ENCODE measurements at regions of chr2 and their contacts with region 1.

Region 1: DNA sequence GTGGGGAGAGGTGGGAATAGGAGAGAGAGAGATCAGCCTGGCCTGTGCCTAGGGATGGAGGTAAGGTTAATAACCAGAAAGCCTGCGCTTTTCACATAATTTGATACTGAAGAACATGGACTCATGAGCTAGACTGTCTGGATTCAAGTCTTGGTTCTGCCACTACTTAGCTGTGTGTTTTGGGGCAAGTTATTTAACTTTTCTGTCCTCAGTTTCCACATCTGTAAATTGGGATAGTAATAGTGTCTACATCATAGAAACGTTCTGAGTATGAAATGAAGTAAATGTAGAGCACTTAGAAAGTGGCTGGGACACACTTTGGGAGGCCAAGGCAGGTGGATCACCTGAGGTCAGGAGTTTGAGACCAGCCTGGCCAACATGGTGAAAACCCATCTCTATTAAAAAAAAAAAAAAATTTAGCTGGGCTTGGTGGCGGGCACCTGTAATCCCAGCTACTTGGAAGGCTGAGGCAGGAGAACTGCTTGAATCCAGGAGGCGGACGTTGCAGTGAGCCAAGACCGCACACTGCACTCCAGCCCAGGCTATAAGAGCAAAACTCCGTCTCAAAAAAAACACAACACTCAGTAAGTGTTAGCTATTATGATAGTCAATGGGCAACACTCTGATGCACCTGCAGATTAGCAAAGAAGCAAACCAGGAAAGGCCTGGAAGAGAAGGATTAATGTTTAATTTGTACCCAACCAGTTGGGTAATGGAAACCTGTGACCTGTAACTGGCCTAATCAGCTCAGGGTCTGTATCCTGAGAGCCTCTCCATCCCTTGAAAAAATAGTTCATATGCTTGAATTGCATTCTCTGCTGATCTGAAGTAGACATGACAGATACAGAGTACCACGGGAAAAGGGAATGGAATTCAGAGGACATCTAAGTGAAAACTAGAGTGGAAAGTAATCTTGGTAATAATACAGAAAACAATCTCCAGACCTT is 6.8 kb downstream of the GALM start:
- DNase-seq: no peak
- ATAC-seq: no peak
- H3K4me3 ChIP-seq: no peak overlapping the region
- H3K4me3 Mint-ChIP-seq: no peak overlapping the region
- H3K27ac ChIP-seq: no peak overlapping the region
- H3K27ac Mint-ChIP-seq: peak overlapping the region; percentile 61
- H3K4me1 ChIP-seq: peaks cover 70% of the 10 kb centered on the region
- H3K4me1 Mint-ChIP-seq: peaks cover 68% of the 10 kb centered on the region
- H3K27me3 ChIP-seq: no peaks in the 10 kb centered on the region
- H3K27me3 Mint-ChIP-seq: no peaks in the 10 kb centered on the region
- CTCF ChIP-seq: no peak

Region 2: DNA sequence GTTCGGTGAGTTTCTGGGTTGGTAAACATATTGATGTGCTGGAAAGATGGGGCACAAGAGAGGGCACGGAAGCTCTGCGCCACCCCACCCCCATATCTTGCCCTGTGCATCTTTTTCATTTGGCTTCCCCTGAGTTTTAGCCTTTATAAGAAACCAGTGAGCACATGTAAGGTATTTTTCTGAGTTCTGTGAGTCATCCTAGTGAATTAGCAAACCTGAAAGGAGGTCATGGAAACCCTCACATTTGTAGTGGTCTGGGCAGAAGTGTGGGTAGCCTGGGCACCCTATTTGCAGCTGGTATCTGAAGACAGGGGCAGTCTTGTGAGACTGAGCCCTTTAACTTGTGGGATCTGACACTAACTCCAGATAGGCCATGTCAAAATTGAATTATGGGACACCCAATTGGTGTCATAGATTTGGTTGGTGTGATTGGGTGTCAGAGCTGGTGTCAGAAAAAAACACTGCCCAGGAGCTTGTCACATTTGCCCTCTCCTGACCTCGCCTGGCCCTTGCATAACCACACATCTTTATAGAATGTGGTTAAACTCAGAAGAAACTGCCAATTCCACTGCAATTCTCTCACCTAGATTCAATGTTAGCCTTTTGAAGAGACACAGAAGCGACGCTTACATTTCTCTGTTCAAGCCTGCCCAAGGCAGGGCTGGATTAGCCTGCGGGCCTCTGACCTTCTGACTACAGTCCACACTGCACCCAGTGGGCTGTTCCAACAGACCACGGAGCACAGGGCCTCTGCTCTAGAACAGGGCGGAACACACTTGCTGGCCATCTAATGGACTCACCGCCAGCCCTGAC is 18.8 kb before region 1 on chr2:
- CTCF ChIA-PET with region 1: interaction called, 3 read pairs
- POLR2A ChIA-PET with region 1: interaction called, 32 read pairs
- intact Hi-C with region 1: loop called in 1 of 2 experiments (anchors 1 kb)
- DNase-seq: peak in 10 of 14 experiments; percentile 19 to 82 (median 52)
- ATAC-seq: peak; percentile 78
- H3K4me3 ChIP-seq: no peak overlapping the region
- H3K4me3 Mint-ChIP-seq: no peak overlapping the region
- H3K27ac ChIP-seq: peak overlapping the region in 1 of 2 donors; percentile 64
- H3K27ac Mint-ChIP-seq: peak overlapping the region; percentile 80
- H3K4me1 ChIP-seq: peaks cover 52% of the 10 kb centered on the region
- H3K4me1 Mint-ChIP-seq: peaks cover 33% of the 10 kb centered on the region
- H3K27me3 ChIP-seq: no peaks in the 10 kb centered on the region
- H3K27me3 Mint-ChIP-seq: no peaks in the 10 kb centered on the region
- CTCF ChIP-seq: no peak

Measured in CD4-positive, alpha-beta T cell (primary cell).